Activated CD8-positive, alpha-beta T cell treated with anti-CD3 and anti-CD28 coated beads for 36 hours (primary cell): ENCODE measurements at regions of chr22 and their contacts with region 1.

Region 1: DNA sequence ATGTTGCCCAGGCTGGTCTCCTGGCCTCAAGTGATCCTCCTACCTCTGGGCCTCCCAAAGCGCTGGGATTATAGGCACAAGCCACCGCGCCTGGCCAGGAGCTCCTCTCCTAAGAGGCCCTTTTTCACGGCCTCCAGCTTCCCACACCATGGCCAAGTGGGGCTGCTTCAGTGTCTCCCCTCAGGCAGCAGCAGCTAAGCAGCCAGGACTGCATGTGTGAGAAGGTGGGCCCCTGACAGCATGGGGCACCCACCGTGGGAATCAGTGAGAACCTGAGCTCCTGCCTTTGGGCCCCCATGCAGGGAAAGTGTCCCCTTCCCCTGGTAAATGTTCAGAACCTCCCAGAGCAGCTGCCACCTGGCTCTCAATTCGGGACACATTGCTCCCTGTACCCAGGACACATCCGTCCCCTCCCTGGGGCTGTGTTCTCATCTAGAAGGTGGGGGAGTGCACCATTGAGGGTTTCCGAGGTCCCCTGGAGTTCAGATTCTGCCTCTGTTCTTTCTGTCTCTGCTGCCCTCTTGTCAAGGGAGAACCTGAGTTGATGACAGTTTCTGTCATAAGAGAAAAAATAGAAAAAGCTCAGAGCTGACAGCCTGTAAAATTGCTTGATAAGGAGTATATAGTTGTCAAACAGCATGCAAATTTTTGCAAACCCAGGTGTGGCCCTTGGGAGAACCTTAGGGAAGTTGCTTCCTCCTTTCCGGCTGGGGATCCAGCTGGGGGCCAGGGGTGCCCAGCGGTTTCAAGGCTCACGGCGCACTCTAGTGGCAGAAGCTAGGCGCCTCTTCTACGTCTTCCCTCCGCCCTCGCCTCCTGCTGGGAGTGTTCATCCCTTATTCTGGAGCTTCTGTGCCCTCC is 29.7 kb downstream of the FAM83F start:
- DNase-seq: peak; percentile 76
- ATAC-seq: peak; percentile 83
- H3K4me3 Mint-ChIP-seq: no peak overlapping the region
- H3K27ac Mint-ChIP-seq: no peak overlapping the region
- H3K4me1 Mint-ChIP-seq: peaks cover 5% of the 10 kb centered on the region
- H3K27me3 Mint-ChIP-seq: no peaks in the 10 kb centered on the region
- CTCF ChIP-seq: peak; percentile 99

Region 2: DNA sequence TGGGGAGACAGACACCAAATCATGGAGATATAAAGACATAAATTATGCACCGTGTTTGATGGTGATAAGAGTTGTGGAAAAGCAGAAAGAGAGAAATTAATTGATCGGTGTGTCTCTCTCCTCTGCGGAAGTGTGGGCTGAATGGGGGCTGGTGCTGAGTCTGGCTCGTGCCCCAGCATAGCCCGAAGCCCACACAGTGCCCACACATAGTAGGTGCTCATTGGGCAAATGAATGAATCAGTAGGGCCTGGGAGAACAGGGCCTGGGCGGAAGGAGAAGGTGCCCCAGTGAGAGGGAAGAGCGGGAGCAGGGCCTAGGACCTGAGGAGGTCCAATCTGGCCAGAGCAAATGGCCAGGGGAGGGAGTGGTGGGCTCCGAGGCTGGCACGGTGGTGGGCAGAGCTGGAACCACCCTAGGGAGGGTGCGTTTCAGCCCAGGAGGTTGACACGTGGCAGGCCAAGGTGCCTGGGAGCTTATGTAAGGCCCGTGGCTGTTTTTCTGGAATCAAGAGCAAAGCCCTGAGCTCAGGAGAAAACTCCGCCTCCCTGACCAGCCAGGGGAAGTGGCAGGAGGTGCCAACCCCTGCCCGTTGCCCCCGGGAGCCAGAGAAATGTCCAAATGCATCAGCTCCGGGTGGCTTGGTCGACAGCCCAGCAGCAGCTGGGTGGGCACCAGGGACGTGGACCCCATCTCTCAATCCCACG is 456.0 kb before region 1 on chr22:
- CTCF ChIA-PET with region 1: no interaction called
- POLR2A ChIA-PET with region 1: no interaction called
- intact Hi-C with region 1: no loop called
- DNase-seq: no peak
- ATAC-seq: no peak
- H3K4me3 Mint-ChIP-seq: no peak overlapping the region
- H3K27ac Mint-ChIP-seq: no peak overlapping the region
- H3K4me1 Mint-ChIP-seq: peaks cover 13% of the 10 kb centered on the region
- H3K27me3 Mint-ChIP-seq: no peaks in the 10 kb centered on the region
- CTCF ChIP-seq: no peak

Region 3: GRCh38 chr22:39900306-39901227 is 123.9 kb before region 1 on chr22 and contains the start of gene GRAP2:
- CTCF ChIA-PET with region 1: interaction called, 19 read pairs
- POLR2A ChIA-PET with region 1: no interaction called
- intact Hi-C with region 1: no loop called
- DNase-seq: peak; percentile 83
- ATAC-seq: peak; percentile 89
- H3K4me3 Mint-ChIP-seq: peak within 1 kb of the TSS; percentile 80
- H3K27ac Mint-ChIP-seq: peak within 1 kb of the TSS; percentile 99
- H3K4me1 Mint-ChIP-seq: peaks cover 14% of the 10 kb centered on the region
- H3K27me3 Mint-ChIP-seq: no peaks in the 10 kb centered on the region
- CTCF ChIP-seq: no peak
- total RNA-seq, gene GRAP2: 83.2 to 86.8 TPM

Region 4: DNA sequence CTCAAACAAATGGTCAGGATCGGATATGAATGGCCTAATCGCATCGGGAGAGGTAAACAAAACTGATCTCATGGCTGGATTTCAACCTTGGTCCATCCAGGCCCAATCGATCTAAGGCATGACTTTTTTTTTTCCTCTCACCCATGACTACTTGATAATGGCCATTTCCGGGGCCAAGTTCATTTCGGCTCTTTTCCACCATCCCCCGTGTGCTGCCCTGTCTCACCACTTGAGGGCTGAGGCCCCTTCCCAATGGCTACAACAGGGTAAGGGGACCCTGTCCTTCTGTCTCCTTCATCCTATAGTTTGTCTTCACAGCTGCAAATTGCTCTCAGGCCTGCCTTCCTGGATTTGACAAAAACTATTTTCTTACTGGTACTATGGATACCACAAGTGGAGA is 96.9 kb before region 1 on chr22:
- CTCF ChIA-PET with region 1: interaction called, 28 read pairs
- POLR2A ChIA-PET with region 1: no interaction called
- intact Hi-C with region 1: no loop called
- DNase-seq: peak; percentile 73
- ATAC-seq: peak; percentile 45
- H3K4me3 Mint-ChIP-seq: no peak overlapping the region
- H3K27ac Mint-ChIP-seq: no peak overlapping the region
- H3K4me1 Mint-ChIP-seq: peaks cover 30% of the 10 kb centered on the region
- H3K27me3 Mint-ChIP-seq: no peaks in the 10 kb centered on the region
- CTCF ChIP-seq: peak; percentile 67

Region 5: GRCh38 chr22:39991159-39991860 is 33.1 kb before region 1 on chr22:
- CTCF ChIA-PET with region 1: interaction called, 19 read pairs
- POLR2A ChIA-PET with region 1: interaction called, 3 read pairs
- intact Hi-C with region 1: no loop called
- DNase-seq: no peak
- ATAC-seq: no peak
- H3K4me3 Mint-ChIP-seq: no peak overlapping the region
- H3K27ac Mint-ChIP-seq: no peak overlapping the region
- H3K4me1 Mint-ChIP-seq: peaks cover 17% of the 10 kb centered on the region
- H3K27me3 Mint-ChIP-seq: peaks cover 14% of the 10 kb centered on the region
- CTCF ChIP-seq: no peak

Region 6: DNA sequence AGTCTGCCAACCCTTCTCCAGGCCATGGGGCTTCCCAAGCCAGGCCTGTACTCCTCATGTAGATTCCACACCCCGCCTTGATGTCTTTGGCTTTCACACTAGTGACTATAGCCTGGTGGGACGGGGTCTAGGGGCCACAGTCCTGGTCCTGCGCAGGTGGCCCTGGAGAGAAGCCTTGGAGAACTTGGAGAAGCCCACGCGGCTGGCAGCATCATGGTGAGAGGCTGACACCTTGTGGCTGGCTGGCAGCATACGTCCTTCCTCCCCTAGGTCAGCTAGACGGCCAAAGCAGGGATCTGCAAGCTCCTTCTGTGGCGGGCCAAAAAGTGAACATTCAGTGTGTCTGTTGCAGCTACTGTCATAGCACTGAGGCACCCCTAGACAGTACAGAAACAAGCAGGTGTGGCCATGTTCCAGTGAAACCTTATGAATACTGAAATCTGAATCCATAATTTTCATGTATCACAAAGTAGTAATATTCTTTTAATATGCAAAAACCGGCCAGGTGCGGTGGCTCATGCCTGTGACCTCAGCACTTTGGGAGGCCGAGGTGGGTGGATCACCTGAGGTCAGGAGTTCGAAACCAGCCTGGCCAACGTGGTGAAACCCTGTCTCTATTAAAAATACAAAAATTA is 12.3 kb after region 1 on chr22:
- CTCF ChIA-PET with region 1: interaction called, 37 read pairs
- POLR2A ChIA-PET with region 1: interaction called, 4 read pairs
- intact Hi-C with region 1: no loop called
- DNase-seq: peak; percentile 75
- ATAC-seq: peak; percentile 87
- H3K4me3 Mint-ChIP-seq: no peak overlapping the region
- H3K27ac Mint-ChIP-seq: no peak overlapping the region
- H3K4me1 Mint-ChIP-seq: no peaks in the 10 kb centered on the region
- H3K27me3 Mint-ChIP-seq: peaks cover 5% of the 10 kb centered on the region
- CTCF ChIP-seq: peak; percentile 87

Region 7: GRCh38 chr22:40055143-40055883 is 30.9 kb after region 1 on chr22:
- CTCF ChIA-PET with region 1: no interaction called
- POLR2A ChIA-PET with region 1: no interaction called
- intact Hi-C with region 1: no loop called
- DNase-seq: peak; percentile 50
- ATAC-seq: peak; percentile 86
- H3K4me3 Mint-ChIP-seq: peak overlapping the region; percentile 74
- H3K27ac Mint-ChIP-seq: peak overlapping the region; percentile 95
- H3K4me1 Mint-ChIP-seq: peaks cover 78% of the 10 kb centered on the region
- H3K27me3 Mint-ChIP-seq: no peaks in the 10 kb centered on the region
- CTCF ChIP-seq: no peak

Region 8: GRCh38 chr22:40137132-40137531 is 112.7 kb after region 1 on chr22:
- CTCF ChIA-PET with region 1: no interaction called
- POLR2A ChIA-PET with region 1: no interaction called
- intact Hi-C with region 1: no loop called
- DNase-seq: no peak
- ATAC-seq: no peak
- H3K4me3 Mint-ChIP-seq: no peak overlapping the region
- H3K27ac Mint-ChIP-seq: no peak overlapping the region
- H3K4me1 Mint-ChIP-seq: peaks cover 7% of the 10 kb centered on the region
- H3K27me3 Mint-ChIP-seq: no peaks in the 10 kb centered on the region
- CTCF ChIP-seq: no peak

Region 9: DNA sequence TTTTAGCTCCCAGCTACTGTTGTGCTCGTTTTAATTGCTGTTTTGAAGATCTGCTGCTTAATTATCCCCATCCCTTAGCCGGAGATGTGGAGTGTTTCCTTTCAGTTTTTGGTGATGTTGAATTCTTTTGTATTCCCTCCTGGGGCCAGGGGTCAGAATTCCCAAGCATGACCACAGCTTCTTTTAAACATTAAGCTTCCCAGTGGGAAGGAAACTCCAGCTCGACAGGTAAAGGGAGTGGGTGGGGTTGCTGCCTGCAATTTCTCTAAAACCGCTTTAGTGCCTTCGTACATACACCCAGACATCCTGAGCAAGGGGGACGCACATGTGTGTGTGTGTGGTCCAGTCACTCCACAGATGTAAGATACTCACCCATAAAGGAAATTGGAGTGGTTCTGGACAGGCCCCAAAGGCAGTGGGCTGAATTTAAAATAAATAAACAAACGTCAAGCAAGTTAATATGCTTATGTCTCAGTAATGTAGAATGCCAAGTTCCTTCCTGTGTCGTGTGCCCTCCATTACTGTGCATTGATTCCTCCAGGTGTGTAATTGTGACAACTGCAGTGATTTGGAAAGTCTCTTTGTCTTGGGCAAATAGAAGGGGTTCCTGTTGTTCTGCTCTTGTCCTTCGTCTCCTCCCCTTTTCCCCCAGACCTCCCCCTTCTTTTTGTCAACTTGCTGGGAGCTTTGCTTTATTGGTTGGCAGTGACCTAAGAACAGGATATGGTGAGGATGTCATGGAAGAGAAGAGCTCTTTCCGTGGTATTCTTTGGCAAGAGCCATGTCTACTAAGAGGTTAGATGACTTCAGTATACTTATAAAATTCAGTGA is 302.7 kb after region 1 on chr22:
- CTCF ChIA-PET with region 1: no interaction called
- POLR2A ChIA-PET with region 1: no interaction called
- intact Hi-C with region 1: no loop called
- DNase-seq: peak; percentile 29
- ATAC-seq: peak; percentile 9
- H3K4me3 Mint-ChIP-seq: peak overlapping the region; percentile 22
- H3K27ac Mint-ChIP-seq: peak overlapping the region; percentile 87
- H3K4me1 Mint-ChIP-seq: peaks cover 93% of the 10 kb centered on the region
- H3K27me3 Mint-ChIP-seq: no peaks in the 10 kb centered on the region
- CTCF ChIP-seq: no peak